ENCODE measurements at regions of chr2 and their contacts with region 1.

Region 1: GRCh38 chr2:169584005-169584877 is at the start of gene PPIG:
- DNase-seq: peak; percentile 88
- ATAC-seq: peak; percentile 91
- H3K4me3 ChIP-seq: peak within 1 kb of the TSS; percentile 98 to 100
- H3K27ac ChIP-seq: peak within 1 kb of the TSS; percentile 87
- H3K4me1 ChIP-seq: peaks cover 10 to 15% of the 10 kb centered on the region in 2 experiments; a peak in 3 of 4 replicates
- H3K27me3 ChIP-seq: no peaks in the 10 kb centered on the region
- CTCF ChIP-seq: no peak
- POLR2A ChIP-seq: peak; percentile 22
- RAD21 ChIP-seq: no peak
- total RNA-seq, gene PPIG: 55.3 TPM

Region 2: DNA sequence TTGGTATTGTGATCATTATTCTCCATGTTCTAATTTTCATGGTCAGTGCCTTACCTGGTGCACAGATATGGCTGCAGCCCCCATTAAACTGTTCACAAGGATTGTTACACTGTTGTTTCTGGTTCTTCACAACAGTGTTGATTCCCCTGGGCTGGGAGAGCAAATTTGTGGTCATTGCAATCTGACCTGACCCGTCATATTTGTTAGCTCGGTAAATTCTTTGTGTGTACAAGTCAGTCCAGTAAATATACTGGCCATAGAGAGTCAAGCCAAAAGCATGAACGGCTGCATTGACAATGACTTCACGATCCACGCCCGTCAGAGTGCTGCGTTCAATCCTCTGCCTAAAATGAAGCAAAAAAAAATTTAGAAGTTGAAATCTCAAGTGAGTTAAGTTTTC is 380.3 kb before region 1 on chr2:
- CTCF ChIA-PET with region 1: no interaction called
- POLR2A ChIA-PET with region 1: no interaction called
- RAD21 ChIA-PET with region 1: no interaction called
- intact Hi-C with region 1: no loop called
- DNase-seq: no peak
- ATAC-seq: no peak
- H3K4me3 ChIP-seq: no peak overlapping the region
- H3K27ac ChIP-seq: no peak overlapping the region
- H3K4me1 ChIP-seq: no peaks in the 10 kb centered on the region
- H3K27me3 ChIP-seq: no peaks in the 10 kb centered on the region
- CTCF ChIP-seq: no peak
- POLR2A ChIP-seq: no peak
- RAD21 ChIP-seq: no peak

Region 3: DNA sequence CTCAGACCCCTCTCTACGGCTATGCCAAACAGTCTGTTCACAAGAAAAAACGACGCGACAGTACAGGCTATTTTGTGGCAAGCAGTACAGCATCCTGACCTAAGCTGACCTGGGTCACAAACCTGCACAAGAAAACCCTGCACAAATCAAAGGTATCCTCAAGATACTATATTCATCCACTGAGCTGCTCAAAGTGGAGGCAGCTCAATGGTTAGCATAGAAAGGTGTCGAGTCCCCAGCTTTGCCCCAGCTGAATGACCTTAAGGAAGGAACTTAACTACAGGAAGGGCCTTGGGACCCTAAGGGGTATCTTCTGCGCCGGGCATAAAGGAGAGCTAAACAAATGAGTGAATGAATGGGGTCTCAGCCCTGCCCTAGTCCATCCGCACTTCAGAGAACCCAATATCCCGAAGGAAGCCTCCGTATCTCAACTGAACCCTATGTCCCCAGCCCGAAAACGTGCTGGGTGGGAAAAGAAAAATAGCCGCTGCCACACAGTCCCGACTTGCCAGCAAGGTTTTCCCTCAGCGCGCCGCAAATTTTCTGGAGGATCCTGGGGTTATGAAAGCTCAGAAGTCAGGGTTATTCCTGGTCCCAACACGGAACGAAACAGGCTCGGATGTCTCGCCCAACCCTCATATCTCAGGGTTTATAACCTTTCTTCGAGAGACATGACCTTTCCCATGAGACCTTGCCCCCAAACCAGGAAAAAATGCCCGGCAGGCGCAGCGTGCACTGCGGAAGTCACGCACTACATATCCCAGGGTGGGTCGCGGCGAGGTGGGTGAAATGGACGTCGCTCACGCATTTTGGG is 10.9 kb before region 1 on chr2 and contains the start of gene FASTKD1:
- CTCF ChIA-PET with region 1: no interaction called
- POLR2A ChIA-PET with region 1: interaction called, 9 read pairs
- RAD21 ChIA-PET with region 1: no interaction called
- intact Hi-C with region 1: loop called (anchors 1 kb)
- DNase-seq: peak; percentile 82
- ATAC-seq: peak; percentile 98
- H3K4me3 ChIP-seq: peak within 1 kb of the TSS; percentile 85 to 89
- H3K27ac ChIP-seq: peak within 1 kb of the TSS; percentile 66
- H3K4me1 ChIP-seq: peaks cover 0 to 15% of the 10 kb centered on the region in 2 experiments; a peak in 3 of 4 replicates
- H3K27me3 ChIP-seq: no peaks in the 10 kb centered on the region
- CTCF ChIP-seq: no peak
- POLR2A ChIP-seq: peak; percentile 75
- RAD21 ChIP-seq: no peak
- total RNA-seq, gene FASTKD1: 37.6 TPM

Region 4: DNA sequence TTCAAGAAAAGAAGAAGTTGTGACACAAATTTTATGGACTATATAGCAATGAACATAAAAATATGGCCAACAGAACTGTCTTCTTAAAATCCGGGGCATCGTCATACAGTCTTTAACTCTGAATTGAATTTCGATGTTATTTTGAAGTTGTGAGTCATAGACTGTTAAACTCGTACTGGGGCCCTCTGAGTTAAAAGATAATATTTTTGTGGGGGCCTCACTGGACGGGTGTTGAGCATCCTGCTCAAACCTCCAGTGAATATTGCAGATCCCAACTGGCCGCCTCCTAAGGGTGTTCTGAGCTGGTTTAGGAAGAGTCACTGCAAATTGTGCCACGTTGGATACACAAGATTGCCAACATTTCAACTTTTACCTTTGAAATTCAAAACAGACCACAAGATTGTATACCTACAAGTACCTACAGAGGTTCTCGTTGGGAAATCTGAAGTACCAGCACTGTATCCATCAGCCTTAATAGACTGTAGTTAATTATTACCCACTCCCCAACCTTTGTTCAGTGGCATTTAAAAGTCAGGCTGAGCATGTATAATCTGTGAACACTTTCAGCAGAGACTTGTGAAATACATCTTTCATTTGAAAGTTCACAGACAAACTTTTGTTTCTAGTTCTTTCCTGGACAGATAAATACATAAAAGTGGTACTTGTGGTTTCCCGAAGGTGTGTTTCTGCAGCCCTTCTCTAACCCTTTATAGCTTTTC is 177.2 kb after region 1 on chr2:
- CTCF ChIA-PET with region 1: no interaction called
- POLR2A ChIA-PET with region 1: no interaction called
- RAD21 ChIA-PET with region 1: no interaction called
- intact Hi-C with region 1: no loop called
- DNase-seq: no peak
- ATAC-seq: no peak
- H3K4me3 ChIP-seq: no peak overlapping the region
- H3K27ac ChIP-seq: no peak overlapping the region
- H3K4me1 ChIP-seq: peaks cover 0 to 11% of the 10 kb centered on the region in 2 experiments; a peak in 3 of 4 replicates
- H3K27me3 ChIP-seq: no peaks in the 10 kb centered on the region
- CTCF ChIP-seq: no peak
- POLR2A ChIP-seq: no peak
- RAD21 ChIP-seq: no peak

Region 5: DNA sequence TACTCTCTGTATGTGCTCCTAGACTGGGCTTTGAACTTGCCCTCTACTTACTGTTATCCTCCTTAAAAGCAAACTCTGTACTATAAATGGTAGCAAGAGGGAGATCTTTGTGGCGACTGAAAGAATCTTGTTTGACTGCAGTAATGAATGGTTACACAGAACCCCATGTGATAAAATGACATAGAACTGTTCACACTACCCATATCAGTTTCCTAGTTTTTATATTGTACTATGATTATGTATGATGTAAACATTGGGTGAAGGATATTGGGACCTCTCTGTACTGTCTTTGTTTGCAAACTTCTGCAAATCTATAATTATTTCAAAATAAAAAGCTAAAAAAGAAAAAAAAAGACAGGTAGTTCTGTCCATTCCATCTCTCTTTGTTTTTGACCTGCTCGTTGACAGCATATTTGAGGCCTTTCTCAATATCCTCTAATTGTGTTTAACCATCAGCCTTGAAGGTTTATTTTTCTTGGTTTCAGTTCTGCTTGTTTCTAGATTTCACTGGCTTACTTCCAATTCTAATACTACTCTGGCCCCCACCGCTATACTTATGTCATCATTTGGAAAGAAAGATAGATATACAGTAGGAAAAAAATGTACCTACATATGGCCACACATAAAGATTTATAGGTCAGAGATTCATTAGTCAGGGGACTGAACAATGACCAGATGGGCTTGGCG is 514.5 kb after region 1 on chr2:
- CTCF ChIA-PET with region 1: no interaction called
- POLR2A ChIA-PET with region 1: no interaction called
- RAD21 ChIA-PET with region 1: no interaction called
- intact Hi-C with region 1: no loop called
- DNase-seq: no peak
- ATAC-seq: no peak
- H3K4me3 ChIP-seq: no peak overlapping the region
- H3K27ac ChIP-seq: no peak overlapping the region
- H3K4me1 ChIP-seq: no peaks in the 10 kb centered on the region
- H3K27me3 ChIP-seq: no peaks in the 10 kb centered on the region
- CTCF ChIP-seq: no peak
- POLR2A ChIP-seq: no peak
- RAD21 ChIP-seq: no peak